ENCODE measurements at regions of chr2 and their contacts with region 1.

Region 1: GRCh38 chr2:28594289-28595108 is 98.6 kb downstream of the PLB1 start:
- DNase-seq: peak; percentile 62
- ATAC-seq: peak; percentile 79
- H3K4me3 Mint-ChIP-seq: peak overlapping the region; percentile 44
- H3K27ac Mint-ChIP-seq: no peak overlapping the region
- H3K4me1 Mint-ChIP-seq: peaks cover 10% of the 10 kb centered on the region
- H3K27me3 Mint-ChIP-seq: peaks cover 5% of the 10 kb centered on the region
- CTCF ChIP-seq: peak; percentile 66

Region 2: DNA sequence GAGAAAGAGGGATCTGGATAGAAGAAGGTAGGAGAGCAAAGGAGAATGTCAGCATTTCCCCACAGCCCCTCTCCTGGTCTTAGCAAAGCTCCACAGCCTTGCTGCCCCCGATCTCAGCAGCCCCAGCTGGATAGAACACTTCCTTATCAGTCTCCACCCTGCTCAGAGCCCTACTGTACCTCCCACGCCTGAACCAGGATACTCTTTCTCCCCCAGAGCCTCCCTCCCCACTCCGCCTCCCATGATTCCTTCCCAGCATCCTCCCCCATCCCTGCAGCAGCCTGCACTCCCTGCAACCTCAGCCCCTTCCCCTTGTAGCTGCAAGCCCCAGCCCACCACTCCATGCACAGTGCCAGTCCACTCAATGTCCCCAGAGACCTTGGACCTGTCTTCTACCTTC is 72.8 kb before region 1 on chr2:
- CTCF ChIA-PET with region 1: no interaction called
- POLR2A ChIA-PET with region 1: no interaction called
- intact Hi-C with region 1: no loop called
- DNase-seq: no peak
- ATAC-seq: no peak
- H3K4me3 Mint-ChIP-seq: no peak overlapping the region
- H3K27ac Mint-ChIP-seq: no peak overlapping the region
- H3K4me1 Mint-ChIP-seq: no peaks in the 10 kb centered on the region
- H3K27me3 Mint-ChIP-seq: peaks cover 49% of the 10 kb centered on the region
- CTCF ChIP-seq: no peak

Region 3: DNA sequence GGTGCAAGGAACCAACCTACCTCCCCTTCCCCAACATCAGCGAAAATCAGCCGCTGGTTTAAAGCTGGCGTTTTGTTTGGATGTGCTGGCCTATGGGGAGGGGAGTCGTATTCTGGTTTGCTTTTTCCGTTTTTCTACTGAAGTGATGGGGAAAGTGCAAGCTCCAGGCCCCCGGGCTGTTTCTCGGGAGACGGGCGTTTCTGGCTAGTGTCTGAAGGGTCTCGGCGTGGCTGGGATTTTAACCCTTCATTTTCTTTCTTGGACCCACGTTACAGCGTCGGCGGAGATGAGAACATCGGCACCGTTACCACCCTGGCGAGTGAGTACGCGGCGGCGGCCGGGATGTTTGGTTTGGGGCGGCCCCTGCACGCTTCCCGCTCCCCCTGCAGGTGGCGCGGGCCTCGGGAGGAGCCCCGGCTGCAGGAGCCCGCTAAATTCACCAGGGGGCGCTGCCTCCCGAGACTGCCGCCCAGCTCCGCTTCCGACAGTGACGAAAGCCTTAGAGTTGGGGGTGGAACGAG is 27.9 kb before region 1 on chr2:
- CTCF ChIA-PET with region 1: interaction called, 21 read pairs
- POLR2A ChIA-PET with region 1: interaction called, 4 read pairs
- intact Hi-C with region 1: loop called (anchors 1 kb)
- DNase-seq: peak; percentile 85
- ATAC-seq: peak; percentile 99
- H3K4me3 Mint-ChIP-seq: peak overlapping the region; percentile 93
- H3K27ac Mint-ChIP-seq: peak overlapping the region; percentile 76
- H3K4me1 Mint-ChIP-seq: peaks cover 12% of the 10 kb centered on the region
- H3K27me3 Mint-ChIP-seq: peaks cover 8% of the 10 kb centered on the region
- CTCF ChIP-seq: peak; percentile 23

Region 4: GRCh38 chr2:28621172-28622100 is 26.9 kb after region 1 on chr2:
- CTCF ChIA-PET with region 1: interaction called, 15 read pairs
- POLR2A ChIA-PET with region 1: interaction called, 6 read pairs
- intact Hi-C with region 1: loop called (anchors 2 kb)
- DNase-seq: no peak
- ATAC-seq: peak; percentile 38
- H3K4me3 Mint-ChIP-seq: peak overlapping the region; percentile 48
- H3K27ac Mint-ChIP-seq: peak overlapping the region; percentile 79
- H3K4me1 Mint-ChIP-seq: peaks cover 42% of the 10 kb centered on the region
- H3K27me3 Mint-ChIP-seq: no peaks in the 10 kb centered on the region
- CTCF ChIP-seq: no peak

Region 5: DNA sequence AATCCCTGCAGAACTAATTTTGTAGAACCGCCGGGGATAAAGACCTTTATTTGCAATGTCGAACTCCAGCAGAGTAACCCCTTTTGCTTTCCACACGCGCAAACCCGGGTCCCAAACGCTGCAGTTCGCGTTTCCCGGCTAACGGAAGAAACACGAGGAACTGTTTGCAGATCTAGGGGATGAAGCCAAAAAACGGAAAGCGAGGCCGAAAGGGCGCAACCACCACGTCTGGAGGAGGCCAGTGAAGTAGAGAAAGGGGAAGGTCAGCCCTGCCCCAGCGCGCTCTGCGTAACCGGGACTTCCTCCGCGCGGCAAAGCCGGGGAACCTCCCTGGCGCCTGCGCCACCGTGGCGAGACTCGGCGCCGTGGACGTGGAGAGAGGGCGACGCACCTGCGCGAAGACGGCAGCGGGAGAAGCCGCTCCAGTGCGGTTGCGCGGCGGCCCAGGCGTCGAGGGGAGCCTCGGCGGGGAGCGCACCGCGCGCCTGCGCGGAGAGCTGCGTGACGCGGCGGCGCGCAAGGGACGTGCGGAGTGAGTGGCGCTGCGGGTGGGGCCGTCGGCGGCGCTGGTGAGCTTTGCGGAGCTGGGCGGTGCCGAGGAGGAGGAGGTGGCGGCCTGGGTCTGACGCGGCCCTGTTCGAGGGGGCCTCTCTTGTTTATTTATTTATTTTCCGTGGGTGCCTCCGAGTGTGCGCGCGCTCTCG is 156.9 kb after region 1 on chr2 and contains the start of gene PPP1CB:
- CTCF ChIA-PET with region 1: interaction called, 63 read pairs
- POLR2A ChIA-PET with region 1: interaction called, 9 read pairs
- intact Hi-C with region 1: loop called (anchors 1 kb)
- DNase-seq: peak; percentile 96
- ATAC-seq: peak; percentile 86
- H3K4me3 Mint-ChIP-seq: peak within 1 kb of the TSS; percentile 95
- H3K27ac Mint-ChIP-seq: peak within 1 kb of the TSS; percentile 98
- H3K4me1 Mint-ChIP-seq: peaks cover 54% of the 10 kb centered on the region
- H3K27me3 Mint-ChIP-seq: no peaks in the 10 kb centered on the region
- CTCF ChIP-seq: no peak
- total RNA-seq, gene PPP1CB: 130 and 135 TPM in 2 replicates

Region 6: GRCh38 chr2:28780496-28780895 is 186.0 kb after region 1 on chr2:
- CTCF ChIA-PET with region 1: interaction called, 10 read pairs
- POLR2A ChIA-PET with region 1: interaction called, 3 read pairs
- intact Hi-C with region 1: no loop called
- DNase-seq: no peak
- ATAC-seq: no peak
- H3K4me3 Mint-ChIP-seq: no peak overlapping the region
- H3K27ac Mint-ChIP-seq: no peak overlapping the region
- H3K4me1 Mint-ChIP-seq: peaks cover 10% of the 10 kb centered on the region
- H3K27me3 Mint-ChIP-seq: no peaks in the 10 kb centered on the region
- CTCF ChIP-seq: no peak

Region 7: DNA sequence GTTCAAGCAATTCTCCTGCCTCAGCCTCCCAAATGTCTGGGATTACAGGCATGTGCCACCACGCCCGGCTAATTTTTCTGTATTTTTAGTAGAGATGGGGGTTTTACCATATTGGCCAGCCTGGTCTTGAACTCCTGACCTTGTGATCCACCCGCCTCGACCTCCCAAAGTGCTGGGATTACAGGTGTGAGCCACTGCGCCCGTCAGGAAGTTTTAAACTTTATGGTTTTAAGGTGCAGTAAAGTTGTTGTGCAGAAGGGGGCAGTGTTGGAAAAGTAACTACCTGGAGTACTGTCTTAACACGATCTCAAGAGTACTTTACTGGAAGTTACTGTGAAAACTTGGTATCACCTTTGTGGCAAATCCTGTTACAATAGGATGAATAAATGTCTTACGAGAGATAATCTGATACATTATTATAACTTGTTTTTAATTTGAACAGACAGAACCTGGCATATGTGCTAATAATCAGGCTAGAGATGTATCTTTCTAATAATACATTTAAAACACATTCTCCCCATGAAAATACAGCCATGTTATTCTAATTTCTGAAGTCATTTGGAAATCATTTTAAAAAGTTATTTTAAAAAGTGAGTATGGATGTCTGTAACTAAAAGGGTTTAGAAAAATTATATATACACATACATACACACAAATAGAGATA is 226.9 kb after region 1 on chr2:
- CTCF ChIA-PET with region 1: interaction called, 18 read pairs
- POLR2A ChIA-PET with region 1: interaction called, 7 read pairs
- intact Hi-C with region 1: no loop called
- DNase-seq: peak; percentile 17
- ATAC-seq: peak; percentile 72
- H3K4me3 Mint-ChIP-seq: no peak overlapping the region
- H3K27ac Mint-ChIP-seq: no peak overlapping the region
- H3K4me1 Mint-ChIP-seq: peaks cover 4% of the 10 kb centered on the region
- H3K27me3 Mint-ChIP-seq: no peaks in the 10 kb centered on the region
- CTCF ChIP-seq: no peak

Region 8: GRCh38 chr2:29196792-29197788 is 602.6 kb after region 1 on chr2:
- CTCF ChIA-PET with region 1: interaction called, 3 read pairs
- POLR2A ChIA-PET with region 1: no interaction called
- intact Hi-C with region 1: loop called (anchors 1 kb)
- DNase-seq: peak; percentile 44
- ATAC-seq: peak; percentile 71
- H3K4me3 Mint-ChIP-seq: no peak overlapping the region
- H3K27ac Mint-ChIP-seq: no peak overlapping the region
- H3K4me1 Mint-ChIP-seq: peaks cover 4% of the 10 kb centered on the region
- H3K27me3 Mint-ChIP-seq: no peaks in the 10 kb centered on the region
- CTCF ChIP-seq: peak; percentile 50

Region 9: DNA sequence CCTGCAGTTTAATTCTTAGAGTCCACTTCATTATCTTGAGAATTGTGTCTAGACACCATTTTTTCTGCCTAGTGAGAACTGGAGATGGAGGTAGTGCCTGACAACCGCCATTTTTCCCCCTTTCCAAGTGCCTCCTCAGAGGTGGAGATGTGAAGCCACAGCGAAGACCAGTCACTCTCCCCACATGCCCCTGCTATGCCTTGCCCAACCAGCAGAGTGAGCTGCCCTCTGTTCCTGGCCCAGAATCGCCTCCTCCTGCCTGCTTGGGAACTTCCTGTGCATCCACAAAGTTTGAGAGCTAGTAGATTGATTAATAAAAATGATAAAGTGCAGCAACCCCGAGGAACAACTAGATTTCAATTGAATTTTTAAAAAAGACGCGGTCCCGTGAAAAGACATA is 644.0 kb after region 1 on chr2:
- CTCF ChIA-PET with region 1: no interaction called
- POLR2A ChIA-PET with region 1: no interaction called
- intact Hi-C with region 1: no loop called
- DNase-seq: no peak
- ATAC-seq: no peak
- H3K4me3 Mint-ChIP-seq: no peak overlapping the region
- H3K27ac Mint-ChIP-seq: no peak overlapping the region
- H3K4me1 Mint-ChIP-seq: peaks cover 6% of the 10 kb centered on the region
- H3K27me3 Mint-ChIP-seq: peaks cover 11% of the 10 kb centered on the region
- CTCF ChIP-seq: no peak

Measured in activated B cell treated with CpG ODN at 0.5 μM for 24 hours (primary cell).